Naive thymus-derived CD4-positive, alpha-beta T cell (primary cell): ENCODE measurements at regions of chr7 and their contacts with region 1.

Region 1: GRCh38 chr7:134432296-134433152 is 26.4 kb downstream of the AKR1B1 start:
- DNase-seq: peak; percentile 39 to 74 (median 67)
- ATAC-seq: peak; percentile 94
- H3K4me3 ChIP-seq: peak overlapping the region; percentile 59
- H3K4me3 Mint-ChIP-seq: peak overlapping the region; percentile 79 to 91 (median 86)
- H3K27ac ChIP-seq: peak overlapping the region; percentile 37
- H3K27ac Mint-ChIP-seq: peak overlapping the region; percentile 71 to 93 (median 90)
- H3K4me1 ChIP-seq: peaks cover 4 to 14% of the 10 kb centered on the region in 2 donors
- H3K4me1 Mint-ChIP-seq: peaks cover 12 to 17% (median 15%) of the 10 kb centered on the region in 7 donors
- H3K27me3 ChIP-seq: no peaks in the 10 kb centered on the region
- H3K27me3 Mint-ChIP-seq: peaks cover 0 to 16% (median 0%) of the 10 kb centered on the region in 5 donors

Region 2: GRCh38 chr7:134394046-134394445 is 38.5 kb before region 1 on chr7:
- CTCF ChIA-PET with region 1: no interaction called
- POLR2A ChIA-PET with region 1: no interaction called
- intact Hi-C with region 1: no loop called
- DNase-seq: no peak
- ATAC-seq: no peak
- H3K4me3 ChIP-seq: no peak overlapping the region
- H3K4me3 Mint-ChIP-seq: no peak overlapping the region
- H3K27ac ChIP-seq: no peak overlapping the region
- H3K27ac Mint-ChIP-seq: no peak overlapping the region
- H3K4me1 ChIP-seq: no peaks in the 10 kb centered on the region
- H3K4me1 Mint-ChIP-seq: no peaks in the 10 kb centered on the region
- H3K27me3 ChIP-seq: no peaks in the 10 kb centered on the region
- H3K27me3 Mint-ChIP-seq: peaks cover 0 to 21% (median 12%) of the 10 kb centered on the region in 5 donors

Region 3: GRCh38 chr7:134420424-134421125 is 11.9 kb before region 1 on chr7:
- CTCF ChIA-PET with region 1: interaction called, 13 read pairs
- POLR2A ChIA-PET with region 1: no interaction called
- intact Hi-C with region 1: no loop called
- DNase-seq: no peak
- ATAC-seq: no peak
- H3K4me3 ChIP-seq: no peak overlapping the region
- H3K4me3 Mint-ChIP-seq: no peak overlapping the region
- H3K27ac ChIP-seq: no peak overlapping the region
- H3K27ac Mint-ChIP-seq: no peak overlapping the region
- H3K4me1 ChIP-seq: no peaks in the 10 kb centered on the region
- H3K4me1 Mint-ChIP-seq: peaks cover 0 to 3% (median 0%) of the 10 kb centered on the region in 7 donors
- H3K27me3 ChIP-seq: no peaks in the 10 kb centered on the region
- H3K27me3 Mint-ChIP-seq: peaks cover 0 to 9% (median 4%) of the 10 kb centered on the region in 5 donors

Region 4: DNA sequence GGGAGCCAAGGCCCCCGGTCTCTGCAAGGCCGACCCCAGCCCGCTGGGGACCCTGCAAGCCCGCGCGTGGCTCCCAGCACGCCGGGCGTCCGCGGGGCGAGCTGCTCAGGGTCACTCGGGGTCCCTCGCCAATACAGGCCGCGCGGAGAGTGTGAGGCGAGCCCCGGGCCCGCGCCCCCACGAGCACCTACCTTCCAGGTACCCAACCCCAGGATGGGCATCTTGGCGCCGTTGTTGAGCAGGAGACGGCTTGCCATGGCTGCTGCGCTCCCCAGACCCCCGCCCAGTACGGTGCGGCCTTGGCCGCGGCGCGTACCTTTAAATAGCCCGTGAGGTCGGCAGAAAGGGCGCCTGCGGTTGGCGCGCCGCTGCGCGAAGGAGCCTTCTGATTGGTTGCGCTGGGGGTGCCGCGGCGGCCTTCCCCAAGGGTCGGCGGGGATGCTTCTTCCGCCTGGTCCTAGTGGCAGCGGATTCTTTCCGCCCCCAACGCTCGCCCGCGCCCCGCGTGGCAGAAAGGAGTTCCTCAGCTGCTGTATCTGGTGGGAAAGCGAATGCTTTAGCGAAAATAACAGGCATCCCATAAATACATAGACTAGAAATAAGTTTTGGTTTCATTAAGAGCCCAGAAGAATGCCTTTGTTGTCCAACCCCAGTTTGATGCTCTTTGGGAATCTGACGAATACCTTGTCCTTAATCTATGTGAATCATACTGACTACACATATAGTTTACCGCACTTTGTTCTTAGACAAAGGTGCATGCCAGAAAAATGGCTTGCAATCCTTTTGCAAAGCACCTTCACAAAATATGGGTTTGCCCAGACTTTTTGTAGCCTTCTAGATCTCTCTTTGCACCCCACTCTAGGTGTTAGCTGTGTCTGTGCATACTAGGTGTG is 26.5 kb after region 1 on chr7 and contains the start of gene AKR1B1:
- CTCF ChIA-PET with region 1: interaction called, 12 read pairs
- POLR2A ChIA-PET with region 1: interaction called, 9 read pairs
- intact Hi-C with region 1: loop called (anchors 1 kb)
- DNase-seq: peak; percentile 76 to 88 (median 84)
- ATAC-seq: peak; percentile 94
- H3K4me3 ChIP-seq: peak within 1 kb of the TSS; percentile 78
- H3K4me3 Mint-ChIP-seq: peak within 1 kb of the TSS; percentile 71 to 94 (median 89)
- H3K27ac ChIP-seq: peak within 1 kb of the TSS; percentile 72
- H3K27ac Mint-ChIP-seq: peak within 1 kb of the TSS; percentile 80 to 92 (median 84)
- H3K4me1 ChIP-seq: peaks cover 20 to 30% of the 10 kb centered on the region in 2 donors
- H3K4me1 Mint-ChIP-seq: peaks cover 30 to 55% (median 48%) of the 10 kb centered on the region in 7 donors
- H3K27me3 ChIP-seq: no peaks in the 10 kb centered on the region
- H3K27me3 Mint-ChIP-seq: no peaks in the 10 kb centered on the region
- total RNA-seq, gene AKR1B1: 62.2 to 108 (median 100) TPM

Region 5: DNA sequence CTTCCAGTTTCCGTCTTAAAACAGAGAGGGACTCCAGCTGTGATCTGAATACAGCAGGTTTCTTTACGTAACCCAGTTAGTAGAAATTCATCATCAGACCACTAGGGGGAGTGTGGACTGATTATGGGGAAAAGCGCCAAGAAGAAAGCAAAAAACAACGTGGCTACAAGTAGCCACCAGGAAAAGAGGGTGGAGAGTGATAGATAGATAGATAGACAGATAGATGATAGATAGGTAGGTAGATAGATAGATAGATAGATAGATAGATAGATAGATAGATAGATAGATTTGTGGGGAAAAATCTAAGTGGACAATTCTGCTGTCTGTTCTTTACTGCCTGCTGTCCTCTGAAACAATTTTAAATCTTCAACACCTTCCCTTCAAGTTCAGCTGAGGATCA is 82.1 kb after region 1 on chr7:
- CTCF ChIA-PET with region 1: interaction called, 66 read pairs
- POLR2A ChIA-PET with region 1: no interaction called
- intact Hi-C with region 1: loop called (anchors 1 kb)
- DNase-seq: peak in 7 of 9 donors; percentile 32 to 67 (median 57)
- ATAC-seq: peak; percentile 81
- H3K4me3 ChIP-seq: no peak overlapping the region
- H3K4me3 Mint-ChIP-seq: peak overlapping the region in 1 of 10 donors; percentile 49
- H3K27ac ChIP-seq: no peak overlapping the region
- H3K27ac Mint-ChIP-seq: no peak overlapping the region
- H3K4me1 ChIP-seq: no peaks in the 10 kb centered on the region
- H3K4me1 Mint-ChIP-seq: peaks cover 4 to 6% (median 5%) of the 10 kb centered on the region in 7 donors
- H3K27me3 ChIP-seq: no peaks in the 10 kb centered on the region
- H3K27me3 Mint-ChIP-seq: peaks cover 6 to 21% (median 14%) of the 10 kb centered on the region in 5 donors

Region 6: DNA sequence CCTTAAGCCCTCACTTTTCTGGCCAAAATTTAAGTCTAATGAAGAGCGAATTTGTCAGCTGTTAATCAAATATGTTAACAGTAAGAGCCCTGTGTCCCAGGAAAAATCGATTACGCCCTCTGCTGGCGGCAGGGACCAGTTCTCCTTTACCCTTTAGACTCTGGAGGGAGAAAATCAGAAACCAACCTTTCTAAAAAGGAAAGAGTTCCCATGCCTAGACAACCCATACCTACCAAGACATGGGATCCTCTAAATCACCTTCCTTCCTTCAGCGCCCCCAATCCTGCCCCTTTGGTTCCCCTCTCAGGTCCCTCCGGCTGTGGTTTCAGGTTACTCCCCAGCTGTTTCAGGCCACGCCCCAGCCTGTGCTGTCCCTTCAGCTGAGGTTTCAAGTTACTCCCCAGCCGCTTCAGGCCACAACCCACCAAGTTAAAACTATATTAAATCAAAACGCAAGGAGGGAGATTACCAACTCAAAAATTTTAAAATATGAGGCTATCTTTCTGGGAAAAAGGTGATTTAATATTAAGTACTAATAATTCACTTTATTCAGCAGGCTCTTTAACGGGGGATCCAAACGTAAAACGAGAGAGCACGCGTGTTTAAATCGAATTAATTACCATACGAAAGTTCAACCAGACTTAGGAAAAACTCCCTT is 115.0 kb after region 1 on chr7:
- CTCF ChIA-PET with region 1: interaction called, 44 read pairs
- POLR2A ChIA-PET with region 1: no interaction called
- intact Hi-C with region 1: loop called (anchors 1 kb)
- DNase-seq: peak; percentile 11 to 70 (median 54)
- ATAC-seq: peak; percentile 80
- H3K4me3 ChIP-seq: no peak overlapping the region
- H3K4me3 Mint-ChIP-seq: peak overlapping the region in 2 of 10 donors; percentile 19 to 38
- H3K27ac ChIP-seq: no peak overlapping the region
- H3K27ac Mint-ChIP-seq: peak overlapping the region in 1 of 9 donors; percentile 70
- H3K4me1 ChIP-seq: no peaks in the 10 kb centered on the region
- H3K4me1 Mint-ChIP-seq: peaks cover 0 to 7% (median 0%) of the 10 kb centered on the region in 7 donors
- H3K27me3 ChIP-seq: peaks cover 0 to 4% of the 10 kb centered on the region in 2 donors
- H3K27me3 Mint-ChIP-seq: peaks cover 4 to 27% (median 12%) of the 10 kb centered on the region in 5 donors

Region 7: GRCh38 chr7:134954197-134955082 is 521.9 kb after region 1 on chr7:
- CTCF ChIA-PET with region 1: no interaction called
- POLR2A ChIA-PET with region 1: no interaction called
- intact Hi-C with region 1: loop called (anchors 5 kb)
- DNase-seq: peak in 6 of 9 donors; percentile 29 to 63 (median 48)
- ATAC-seq: peak; percentile 59
- H3K4me3 ChIP-seq: no peak overlapping the region
- H3K4me3 Mint-ChIP-seq: no peak overlapping the region
- H3K27ac ChIP-seq: no peak overlapping the region
- H3K27ac Mint-ChIP-seq: peak overlapping the region in 1 of 9 donors; percentile 26
- H3K4me1 ChIP-seq: no peaks in the 10 kb centered on the region
- H3K4me1 Mint-ChIP-seq: peaks cover 0 to under 1% (median 0%) of the 10 kb centered on the region in 7 donors
- H3K27me3 ChIP-seq: no peaks in the 10 kb centered on the region
- H3K27me3 Mint-ChIP-seq: no peaks in the 10 kb centered on the region